Activated naive CD4-positive, alpha-beta T cell treated with anti-CD3 and anti-CD28 coated beads for 36 hours (primary cell): ENCODE measurements at regions of chr4 and their contacts with region 1.

Region 1: DNA sequence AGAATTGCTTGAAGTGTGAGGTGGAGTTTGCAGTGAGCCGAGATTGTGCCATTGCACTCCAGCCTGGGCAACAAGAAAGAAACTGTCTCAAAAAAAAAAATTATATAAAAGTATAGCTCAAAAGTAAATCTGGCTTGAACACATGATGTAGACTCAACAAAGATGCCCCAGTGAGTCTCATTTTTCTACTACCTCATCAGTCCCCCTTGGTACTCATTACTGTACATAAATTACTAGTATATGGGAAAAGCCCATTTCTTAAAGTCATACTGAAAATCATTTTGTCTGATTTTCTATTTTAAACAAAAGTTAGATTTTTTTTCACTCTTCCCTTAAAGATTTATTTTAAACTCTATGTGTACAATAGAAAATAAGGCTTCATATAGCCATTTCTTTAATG is 39.2 kb downstream of the FAM241A start:
- DNase-seq: no peak
- H3K4me3 Mint-ChIP-seq: no peak overlapping the region
- H3K27ac Mint-ChIP-seq: no peak overlapping the region
- H3K4me1 Mint-ChIP-seq: peaks cover 39% of the 10 kb centered on the region
- H3K27me3 Mint-ChIP-seq: no peaks in the 10 kb centered on the region

Region 2: GRCh38 chr4:112119353-112119783 is 65.1 kb before region 1 on chr4:
- CTCF ChIA-PET with region 1: interaction called, 3 read pairs
- intact Hi-C with region 1: loop called (anchors 1 kb)
- DNase-seq: peak; percentile 29
- H3K4me3 Mint-ChIP-seq: no peak overlapping the region
- H3K27ac Mint-ChIP-seq: peak overlapping the region; percentile 89
- H3K4me1 Mint-ChIP-seq: peaks cover 22% of the 10 kb centered on the region
- H3K27me3 Mint-ChIP-seq: no peaks in the 10 kb centered on the region

Region 3: DNA sequence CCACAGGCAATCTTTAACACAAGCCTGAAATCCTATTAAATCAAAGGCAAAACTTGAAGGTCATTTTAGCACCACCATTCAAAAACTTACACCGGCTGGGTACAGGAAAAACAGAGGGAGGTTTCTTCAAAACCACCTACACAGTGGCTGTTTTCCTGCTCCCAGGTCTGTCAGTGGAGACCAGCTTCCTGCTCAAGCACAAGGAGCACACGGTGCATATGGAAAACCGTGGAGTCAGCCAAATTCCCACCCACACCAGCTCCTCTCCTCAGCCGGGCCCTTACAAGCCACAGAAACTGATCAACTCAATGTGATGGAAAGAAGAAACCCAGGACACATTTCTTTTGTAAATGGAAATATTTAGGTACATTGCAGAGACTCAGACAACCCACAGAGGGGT is 53.5 kb before region 1 on chr4:
- CTCF ChIA-PET with region 1: no interaction called
- intact Hi-C with region 1: no loop called
- DNase-seq: no peak
- H3K4me3 Mint-ChIP-seq: no peak overlapping the region
- H3K27ac Mint-ChIP-seq: no peak overlapping the region
- H3K4me1 Mint-ChIP-seq: peaks cover 9% of the 10 kb centered on the region
- H3K27me3 Mint-ChIP-seq: peaks cover 3% of the 10 kb centered on the region